PC-3 (cell line): ENCODE measurements at regions of chr3 and their contacts with region 1.

Region 1: GRCh38 chr3:193240850-193241706 is at the start of gene PLAAT1:
- DNase-seq: no peak
- ATAC-seq: peak; percentile 22; the same call in 1 of the 2 replicates
- H3K4me3 ChIP-seq: 0 out of 2 replicates have a peak within 1 kb of the TSS, but pooled peaks have one; percentile 19
- H3K27ac ChIP-seq: no peak within 1 kb of the TSS
- H3K4me1 ChIP-seq: no peaks in the 10 kb centered on the region
- H3K27me3 ChIP-seq: peaks cover 38% of the 10 kb centered on the region
- CTCF ChIP-seq: no peak
- total RNA-seq, gene PLAAT1: not detected in 2 replicates

Region 2: DNA sequence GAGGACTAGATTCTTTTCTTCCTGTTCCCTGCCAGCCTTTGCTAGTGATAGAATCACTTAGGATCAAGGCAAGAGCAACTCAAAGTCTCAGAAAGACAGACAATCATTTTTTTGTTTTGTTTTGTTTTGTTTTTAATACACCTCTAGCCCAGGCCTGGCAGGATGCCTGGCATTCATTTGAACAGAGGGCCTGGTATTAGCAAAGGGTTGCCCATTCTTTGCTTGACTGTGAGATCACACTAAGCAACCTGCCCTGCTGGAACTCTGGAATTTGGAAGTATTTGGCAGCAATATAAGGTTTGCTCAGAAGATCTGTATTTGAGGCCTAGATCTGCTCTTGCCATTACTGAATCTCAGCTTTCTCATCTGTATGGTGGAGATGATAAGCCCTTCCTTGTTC is 159.2 kb after region 1 on chr3:
- CTCF ChIA-PET with region 1: interaction called, 10 read pairs
- POLR2A ChIA-PET with region 1: no interaction called
- intact Hi-C with region 1: no loop called
- DNase-seq: no peak
- ATAC-seq: no peak
- H3K4me3 ChIP-seq: no peak overlapping the region
- H3K27ac ChIP-seq: no peak overlapping the region
- H3K4me1 ChIP-seq: no peaks in the 10 kb centered on the region
- H3K27me3 ChIP-seq: peaks cover 57% of the 10 kb centered on the region
- CTCF ChIP-seq: no peak